ENCODE measurements at regions of chr6 and their contacts with region 1.

Region 1: DNA sequence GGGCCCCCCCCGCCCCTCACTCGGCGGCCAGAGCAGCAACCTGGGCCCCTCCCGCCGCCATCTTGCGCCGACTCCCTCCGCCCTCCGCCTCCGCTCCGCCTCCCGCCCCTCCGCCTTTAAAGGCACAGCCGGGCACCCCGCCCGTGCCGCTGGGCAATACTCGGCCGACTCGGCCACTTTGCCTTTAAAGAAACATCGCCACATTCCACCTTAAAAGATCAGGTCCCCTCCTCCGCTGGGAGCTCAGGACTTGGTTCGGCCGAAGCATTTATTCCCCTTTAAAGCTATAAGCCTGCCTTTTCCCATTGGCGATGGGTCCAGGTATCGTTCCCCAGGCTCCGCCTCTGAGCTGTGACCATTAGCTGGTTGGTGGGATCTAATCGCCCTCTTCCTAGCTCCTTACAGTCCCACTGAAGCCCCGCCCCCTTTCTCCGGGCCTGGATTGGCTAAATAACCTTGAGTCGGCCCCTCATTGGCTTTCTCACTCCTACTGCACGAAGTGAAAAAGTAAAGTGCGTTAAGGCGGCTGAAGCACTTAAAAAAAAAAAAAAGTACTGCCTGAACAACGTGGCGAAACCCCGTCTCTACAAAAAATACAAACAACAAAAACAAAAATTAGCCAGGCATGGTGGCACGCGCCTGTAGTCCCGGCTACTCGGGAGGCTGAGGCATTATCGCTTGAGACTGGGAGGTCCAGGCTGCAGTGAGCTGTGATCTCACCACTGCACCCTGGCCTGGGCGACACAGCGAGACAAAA is at the start of gene ZBTB22:
- DNase-seq: peak; percentile 100
- H3K4me3 ChIP-seq: peak within 1 kb of the TSS; percentile 50 to 52
- H3K27ac ChIP-seq: peak within 1 kb of the TSS; percentile 82 to 89
- H3K4me1 ChIP-seq: peaks cover 45% of the 10 kb centered on the region
- H3K27me3 ChIP-seq: no peaks in the 10 kb centered on the region
- CTCF ChIP-seq: peak in 2 of 3 experiments; percentile 19 to 35
- POLR2A ChIP-seq: no peak
- total RNA-seq, gene ZBTB22: 13.4 to 17.1 TPM

Region 2: GRCh38 chr6:33200219-33201146 is 117.4 kb before region 1 on chr6 and contains the starts of genes RXRB and SLC39A7:
- intact Hi-C with region 1: loop called (anchors 10 kb)
- DNase-seq: peak; percentile 99
- H3K4me3 ChIP-seq: peak within 1 kb of the TSS; percentile 82
- H3K27ac ChIP-seq: peak within 1 kb of the TSS; percentile 91 to 94
- H3K4me1 ChIP-seq: peaks cover 44% of the 10 kb centered on the region
- H3K27me3 ChIP-seq: no peaks in the 10 kb centered on the region
- CTCF ChIP-seq: no peak
- POLR2A ChIP-seq: no peak
- total RNA-seq, gene RXRB: 42.9 to 47.3 TPM
- total RNA-seq, gene SLC39A7: 79.1 to 85.7 TPM

Region 3: GRCh38 chr6:33417903-33418689 is 100.2 kb after region 1 on chr6 and contains the start of gene CUTA:
- intact Hi-C with region 1: loop called (anchors 10 kb)
- DNase-seq: peak; percentile 99
- H3K4me3 ChIP-seq: peak within 1 kb of the TSS; percentile 59 to 86
- H3K27ac ChIP-seq: peak within 1 kb of the TSS; percentile 91 to 99
- H3K4me1 ChIP-seq: peaks cover 35% of the 10 kb centered on the region
- H3K27me3 ChIP-seq: no peaks in the 10 kb centered on the region
- CTCF ChIP-seq: peak; percentile 34 to 70 (median 59)
- POLR2A ChIP-seq: peak; percentile 74
- total RNA-seq, gene CUTA: 139 to 146 TPM

Measured in testis (tissue), 5 donors.